Naive thymus-derived CD4-positive, alpha-beta T cell (primary cell): ENCODE measurements at regions of chr1 and their contacts with region 1.

Region 1: GRCh38 chr1:23634842-23635651 is 56.6 kb upstream of the RPL11 start:
- DNase-seq: peak in 8 of 9 donors; percentile 48 to 80 (median 72)
- ATAC-seq: peak; percentile 91
- H3K4me3 ChIP-seq: peak overlapping the region; percentile 42
- H3K4me3 Mint-ChIP-seq: peak overlapping the region; percentile 64 to 81 (median 75)
- H3K27ac ChIP-seq: peak overlapping the region; percentile 69
- H3K27ac Mint-ChIP-seq: peak overlapping the region; percentile 69 to 97 (median 93)
- H3K4me1 ChIP-seq: peaks cover 0 to 14% of the 10 kb centered on the region in 2 donors
- H3K4me1 Mint-ChIP-seq: peaks cover 18 to 52% (median 40%) of the 10 kb centered on the region in 7 donors
- H3K27me3 ChIP-seq: no peaks in the 10 kb centered on the region
- H3K27me3 Mint-ChIP-seq: peaks cover 0 to 4% (median 0%) of the 10 kb centered on the region in 5 donors

Region 2: DNA sequence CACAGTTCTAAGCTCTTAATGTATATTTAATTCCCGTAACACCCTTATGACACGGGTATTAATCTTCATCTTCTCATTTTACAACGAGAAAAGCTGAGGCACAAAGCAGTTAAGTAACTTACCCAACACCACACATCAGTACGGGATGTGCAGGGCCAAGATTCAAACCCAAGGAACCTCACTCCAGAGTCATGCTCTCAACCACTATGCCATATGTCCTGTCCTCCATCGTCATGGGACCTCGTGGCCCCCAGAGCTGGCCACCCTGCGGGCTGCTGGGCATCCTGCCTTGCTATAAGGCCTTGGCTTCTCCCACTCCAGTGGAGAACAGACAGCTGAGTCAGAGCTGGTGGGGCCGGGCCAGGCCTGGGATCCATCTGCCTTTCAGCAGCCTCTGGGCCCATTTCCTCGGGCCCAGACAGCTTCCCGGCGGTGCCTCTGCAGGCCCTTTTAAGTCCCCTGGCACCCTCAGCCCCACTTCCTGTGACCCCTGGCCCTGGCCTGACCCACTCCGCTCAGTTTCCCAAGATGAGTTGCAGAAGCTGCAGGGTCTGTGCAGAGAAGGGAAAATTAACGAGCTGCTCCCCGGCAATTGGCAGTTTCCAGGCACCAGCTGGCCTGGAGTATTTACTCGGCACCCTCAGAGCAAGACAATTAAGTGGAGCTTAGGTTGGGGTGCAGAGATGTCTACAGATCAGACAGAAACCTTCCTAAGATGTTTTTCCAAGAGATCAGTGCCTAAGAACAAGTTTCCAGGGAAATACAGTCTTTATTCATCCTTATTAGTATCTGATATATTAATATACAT is 826.2 kb before region 1 on chr1:
- CTCF ChIA-PET with region 1: no interaction called
- POLR2A ChIA-PET with region 1: no interaction called
- intact Hi-C with region 1: no loop called
- DNase-seq: no peak
- ATAC-seq: no peak
- H3K4me3 ChIP-seq: no peak overlapping the region
- H3K4me3 Mint-ChIP-seq: no peak overlapping the region
- H3K27ac ChIP-seq: no peak overlapping the region
- H3K27ac Mint-ChIP-seq: no peak overlapping the region
- H3K4me1 ChIP-seq: no peaks in the 10 kb centered on the region
- H3K4me1 Mint-ChIP-seq: no peaks in the 10 kb centered on the region
- H3K27me3 ChIP-seq: no peaks in the 10 kb centered on the region
- H3K27me3 Mint-ChIP-seq: peaks cover 0 to 13% (median 0%) of the 10 kb centered on the region in 5 donors

Region 3: GRCh38 chr1:23496490-23497181 is 138.4 kb before region 1 on chr1:
- CTCF ChIA-PET with region 1: interaction called, 75 read pairs
- POLR2A ChIA-PET with region 1: interaction called, 12 read pairs
- intact Hi-C with region 1: loop called (anchors 1 to 2 kb)
- DNase-seq: no peak
- ATAC-seq: peak; percentile 31
- H3K4me3 ChIP-seq: no peak overlapping the region
- H3K4me3 Mint-ChIP-seq: no peak overlapping the region
- H3K27ac ChIP-seq: no peak overlapping the region
- H3K27ac Mint-ChIP-seq: no peak overlapping the region
- H3K4me1 ChIP-seq: no peaks in the 10 kb centered on the region
- H3K4me1 Mint-ChIP-seq: peaks cover 0 to 5% (median 0%) of the 10 kb centered on the region in 7 donors
- H3K27me3 ChIP-seq: no peaks in the 10 kb centered on the region
- H3K27me3 Mint-ChIP-seq: peaks cover 0 to 14% (median 0%) of the 10 kb centered on the region in 5 donors

Region 4: DNA sequence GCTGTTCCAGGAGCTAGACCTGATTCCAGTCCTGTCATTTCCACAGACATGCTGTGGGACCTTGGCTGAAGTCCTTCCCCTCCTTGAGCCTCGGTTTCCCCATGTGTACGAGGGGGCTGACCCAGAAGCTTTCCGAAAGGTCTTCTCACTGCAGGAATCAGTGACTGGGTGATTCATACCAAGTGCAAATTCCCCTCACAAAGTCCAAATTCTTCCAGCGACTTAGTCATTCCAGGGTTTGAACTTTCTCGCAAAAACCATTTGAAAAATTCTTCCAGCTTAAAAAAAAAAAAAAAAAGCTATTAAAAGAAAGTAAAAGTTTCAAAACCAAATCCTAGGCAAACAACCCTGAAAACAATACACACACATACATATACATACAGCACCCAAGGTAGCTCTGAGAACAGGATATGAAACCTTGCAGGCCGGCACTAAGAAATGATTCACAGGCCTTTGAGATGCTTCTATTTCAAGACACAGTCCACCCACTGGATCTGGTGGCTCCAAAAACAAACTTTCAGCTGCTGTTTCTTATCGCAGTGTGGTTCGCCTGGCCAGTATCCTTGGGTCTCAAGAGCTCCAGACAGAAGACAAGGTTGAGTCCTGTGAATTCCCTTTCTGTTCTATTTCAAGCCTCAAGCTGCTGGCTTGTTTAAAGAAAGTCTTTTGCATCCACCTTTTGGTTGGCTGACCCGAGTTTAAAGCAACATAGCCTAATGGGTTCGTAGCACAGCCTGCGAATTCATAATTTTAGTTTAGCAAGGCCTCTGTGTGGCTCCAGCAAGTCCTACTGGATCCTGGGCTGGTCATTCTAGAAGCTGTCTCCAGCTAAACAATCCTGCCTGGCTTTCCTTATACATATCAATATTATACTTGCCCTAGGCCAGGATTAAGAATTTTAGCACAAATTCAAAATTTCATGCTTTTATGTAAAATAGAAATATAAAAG is 57.7 kb before region 1 on chr1:
- CTCF ChIA-PET with region 1: interaction called, 17 read pairs
- POLR2A ChIA-PET with region 1: interaction called, 6 read pairs
- intact Hi-C with region 1: no loop called
- DNase-seq: peak in 1 of 9 donors; percentile 50
- ATAC-seq: peak; percentile 79
- H3K4me3 ChIP-seq: peak overlapping the region; percentile 25
- H3K4me3 Mint-ChIP-seq: peak overlapping the region; percentile 41 to 72 (median 62)
- H3K27ac ChIP-seq: peak overlapping the region; percentile 59
- H3K27ac Mint-ChIP-seq: peak overlapping the region; percentile 22 to 97 (median 84)
- H3K4me1 ChIP-seq: peaks cover 6 to 29% of the 10 kb centered on the region in 2 donors
- H3K4me1 Mint-ChIP-seq: peaks cover 12 to 67% (median 53%) of the 10 kb centered on the region in 7 donors
- H3K27me3 ChIP-seq: no peaks in the 10 kb centered on the region
- H3K27me3 Mint-ChIP-seq: no peaks in the 10 kb centered on the region

Region 5: DNA sequence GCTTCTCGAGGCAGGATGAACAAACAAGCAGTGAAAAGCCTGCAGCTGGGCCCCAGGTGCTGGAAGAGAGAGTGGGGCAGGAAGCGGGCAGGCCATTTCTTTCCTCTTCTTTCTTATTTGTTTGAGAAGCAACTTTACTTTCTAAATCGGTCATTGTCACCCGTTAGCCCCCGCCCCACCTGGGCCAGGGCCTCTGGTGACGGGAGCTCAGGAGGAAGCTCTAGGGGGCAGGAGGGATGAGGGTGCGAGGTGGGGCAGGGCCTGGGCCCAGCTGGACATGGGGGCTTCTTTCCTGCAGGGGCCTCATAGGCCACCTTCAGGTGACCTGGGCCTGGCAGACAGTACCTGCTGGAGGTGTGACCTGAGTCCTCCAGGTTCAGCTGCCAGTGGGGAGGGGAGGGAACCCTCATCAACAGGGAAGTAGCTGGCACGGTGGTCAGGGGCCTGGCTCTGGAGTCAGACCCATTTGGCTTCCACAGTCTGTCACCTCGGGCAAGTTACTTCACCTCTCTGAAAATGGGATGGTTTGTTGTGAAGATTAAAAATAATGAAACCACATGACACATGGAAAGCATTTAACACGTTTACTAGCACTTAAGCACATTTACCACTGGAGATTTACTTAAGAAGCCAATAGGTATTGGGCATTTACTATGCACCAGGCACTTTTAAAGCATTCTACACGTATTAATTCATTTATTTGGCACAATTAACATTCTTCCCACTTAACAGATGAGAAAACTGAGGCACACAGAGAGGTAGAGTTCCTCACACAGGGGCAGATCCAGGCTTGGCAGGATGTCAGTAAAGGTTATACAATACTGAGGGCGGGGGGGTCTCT is 21.6 kb before region 1 on chr1:
- CTCF ChIA-PET with region 1: interaction called, 71 read pairs
- POLR2A ChIA-PET with region 1: interaction called, 145 read pairs
- intact Hi-C with region 1: no loop called
- DNase-seq: peak in 8 of 9 donors; percentile 52 to 72 (median 64)
- ATAC-seq: peak; percentile 57
- H3K4me3 ChIP-seq: peak overlapping the region; percentile 14
- H3K4me3 Mint-ChIP-seq: peak overlapping the region; percentile 48 to 84 (median 71)
- H3K27ac ChIP-seq: peak overlapping the region; percentile 71
- H3K27ac Mint-ChIP-seq: peak overlapping the region; percentile 91 to 98 (median 96)
- H3K4me1 ChIP-seq: peaks cover 41 to 68% of the 10 kb centered on the region in 2 donors
- H3K4me1 Mint-ChIP-seq: peaks cover 45 to 88% (median 85%) of the 10 kb centered on the region in 7 donors
- H3K27me3 ChIP-seq: no peaks in the 10 kb centered on the region
- H3K27me3 Mint-ChIP-seq: peaks cover 0 to 2% (median 0%) of the 10 kb centered on the region in 5 donors

Region 6: GRCh38 chr1:23648576-23648975 is 13.5 kb after region 1 on chr1:
- CTCF ChIA-PET with region 1: interaction called, 15 read pairs
- POLR2A ChIA-PET with region 1: interaction called, 3 read pairs
- intact Hi-C with region 1: no loop called
- DNase-seq: no peak
- ATAC-seq: no peak
- H3K4me3 ChIP-seq: no peak overlapping the region
- H3K4me3 Mint-ChIP-seq: no peak overlapping the region
- H3K27ac ChIP-seq: no peak overlapping the region
- H3K27ac Mint-ChIP-seq: no peak overlapping the region
- H3K4me1 ChIP-seq: no peaks in the 10 kb centered on the region
- H3K4me1 Mint-ChIP-seq: peaks cover 0 to 5% (median 0%) of the 10 kb centered on the region in 7 donors
- H3K27me3 ChIP-seq: no peaks in the 10 kb centered on the region
- H3K27me3 Mint-ChIP-seq: peaks cover 0 to 12% (median 0%) of the 10 kb centered on the region in 5 donors

Region 7: DNA sequence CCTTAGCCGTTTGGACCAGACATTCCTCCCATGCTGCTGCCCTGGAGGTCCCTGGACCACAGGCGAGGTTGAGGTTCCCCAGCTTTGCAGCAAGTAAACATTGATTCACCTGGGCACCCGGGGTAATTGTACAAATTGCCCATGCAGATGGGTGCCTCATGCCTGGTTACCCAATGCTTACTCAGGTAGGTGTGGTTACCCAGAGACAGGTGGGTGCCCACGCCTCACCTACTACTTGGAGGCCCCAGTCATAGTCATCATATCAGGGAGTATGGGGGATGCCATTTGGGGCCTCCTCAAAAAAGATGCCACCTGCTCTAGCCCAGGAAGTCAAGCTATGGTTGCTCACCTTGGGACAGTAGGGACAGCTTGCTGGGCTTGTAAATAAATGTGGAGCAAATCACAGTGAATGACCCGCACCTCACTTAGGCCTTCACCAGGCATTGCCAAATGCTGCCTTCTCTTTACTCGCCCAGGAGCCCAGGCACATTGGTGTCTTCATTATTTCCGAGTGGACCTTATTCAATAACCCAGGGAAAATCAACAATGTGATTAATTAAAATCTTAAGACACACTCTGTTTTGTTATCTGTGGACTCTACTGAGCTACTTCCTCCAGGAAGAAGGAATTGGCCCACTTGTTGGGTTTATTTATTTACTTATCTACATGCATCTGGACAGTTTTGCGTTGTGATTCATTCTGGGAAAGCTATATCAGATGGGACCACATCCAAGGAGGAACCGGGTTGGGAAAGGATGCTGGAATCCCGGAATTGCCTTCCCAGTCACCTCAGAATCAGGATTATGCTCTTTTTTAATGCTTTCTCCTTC is 648.5 kb after region 1 on chr1:
- CTCF ChIA-PET with region 1: no interaction called
- POLR2A ChIA-PET with region 1: no interaction called
- intact Hi-C with region 1: no loop called
- DNase-seq: no peak
- ATAC-seq: no peak
- H3K4me3 ChIP-seq: no peak overlapping the region
- H3K4me3 Mint-ChIP-seq: no peak overlapping the region
- H3K27ac ChIP-seq: no peak overlapping the region
- H3K27ac Mint-ChIP-seq: no peak overlapping the region
- H3K4me1 ChIP-seq: no peaks in the 10 kb centered on the region
- H3K4me1 Mint-ChIP-seq: no peaks in the 10 kb centered on the region
- H3K27me3 ChIP-seq: no peaks in the 10 kb centered on the region
- H3K27me3 Mint-ChIP-seq: peaks cover 0 to 12% (median 3%) of the 10 kb centered on the region in 5 donors